ENCODE measurements at regions of chr16 and their contacts with region 1.

Region 1: GRCh38 chr16:18801197-18801972 is at the start of gene ARL6IP1:
- DNase-seq: peak; percentile 99 to 100 (median 99)
- H3K4me3 ChIP-seq: peak within 1 kb of the TSS; percentile 87 to 96
- H3K4me3 Mint-ChIP-seq: peak within 1 kb of the TSS; percentile 91 to 99 (median 94)
- H3K27ac ChIP-seq: peak within 1 kb of the TSS; percentile 90
- H3K27ac Mint-ChIP-seq: peak within 1 kb of the TSS; percentile 90 to 98 (median 96)
- H3K4me1 ChIP-seq: peaks cover 50% of the 10 kb centered on the region
- H3K4me1 Mint-ChIP-seq: peaks cover 27 to 67% (median 49%) of the 10 kb centered on the region in 4 donors
- H3K27me3 ChIP-seq: no peaks in the 10 kb centered on the region
- H3K27me3 Mint-ChIP-seq: no peaks in the 10 kb centered on the region
- total RNA-seq, gene ARL6IP1: 105 to 106 TPM

Region 2: GRCh38 chr16:18789850-18790724 is 11.3 kb before region 1 on chr16 and contains the start of gene RPS15A:
- CTCF ChIA-PET with region 1: interaction called, 111 read pairs
- POLR2A ChIA-PET with region 1: interaction called, 176 read pairs
- intact Hi-C with region 1: loop called (anchors 1 kb)
- DNase-seq: peak; percentile 90 to 98 (median 95)
- H3K4me3 ChIP-seq: peak within 1 kb of the TSS; percentile 77 to 98
- H3K4me3 Mint-ChIP-seq: peak within 1 kb of the TSS; percentile 91 to 98 (median 96)
- H3K27ac ChIP-seq: peak within 1 kb of the TSS; percentile 80
- H3K27ac Mint-ChIP-seq: peak within 1 kb of the TSS; percentile 93 to 97 (median 96)
- H3K4me1 ChIP-seq: peaks cover 43% of the 10 kb centered on the region
- H3K4me1 Mint-ChIP-seq: peaks cover 36 to 53% (median 46%) of the 10 kb centered on the region in 4 donors
- H3K27me3 ChIP-seq: no peaks in the 10 kb centered on the region
- H3K27me3 Mint-ChIP-seq: no peaks in the 10 kb centered on the region
- total RNA-seq, gene RPS15A: 3,088 to 3,151 TPM

Region 3: DNA sequence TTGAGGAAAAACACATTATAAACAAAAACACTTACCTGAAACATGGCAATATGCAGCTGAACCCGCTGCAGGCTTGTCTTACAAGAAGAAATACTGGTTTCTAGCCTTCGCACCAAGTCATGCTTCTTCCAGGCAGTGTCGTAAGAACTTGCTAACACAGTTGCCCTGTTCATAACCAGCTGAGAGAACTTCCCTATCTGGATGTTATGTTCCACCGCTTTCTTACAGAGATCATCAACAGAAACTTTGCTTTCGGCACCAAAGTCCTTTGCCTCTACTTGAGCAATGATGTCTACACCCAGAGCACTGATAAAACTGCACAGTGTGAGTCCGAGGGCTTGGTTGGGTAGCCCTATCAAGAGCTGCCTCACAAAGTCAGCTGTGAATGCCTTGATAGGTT is 27.9 kb after region 1 on chr16:
- CTCF ChIA-PET with region 1: interaction called, 17 read pairs
- POLR2A ChIA-PET with region 1: interaction called, 5 read pairs
- intact Hi-C with region 1: no loop called
- DNase-seq: no peak
- H3K4me3 ChIP-seq: no peak overlapping the region
- H3K4me3 Mint-ChIP-seq: no peak overlapping the region
- H3K27ac ChIP-seq: no peak overlapping the region
- H3K27ac Mint-ChIP-seq: peak overlapping the region in 1 of 7 donors; percentile 6
- H3K4me1 ChIP-seq: no peaks in the 10 kb centered on the region
- H3K4me1 Mint-ChIP-seq: no peaks in the 10 kb centered on the region
- H3K27me3 ChIP-seq: no peaks in the 10 kb centered on the region
- H3K27me3 Mint-ChIP-seq: no peaks in the 10 kb centered on the region

Region 4: DNA sequence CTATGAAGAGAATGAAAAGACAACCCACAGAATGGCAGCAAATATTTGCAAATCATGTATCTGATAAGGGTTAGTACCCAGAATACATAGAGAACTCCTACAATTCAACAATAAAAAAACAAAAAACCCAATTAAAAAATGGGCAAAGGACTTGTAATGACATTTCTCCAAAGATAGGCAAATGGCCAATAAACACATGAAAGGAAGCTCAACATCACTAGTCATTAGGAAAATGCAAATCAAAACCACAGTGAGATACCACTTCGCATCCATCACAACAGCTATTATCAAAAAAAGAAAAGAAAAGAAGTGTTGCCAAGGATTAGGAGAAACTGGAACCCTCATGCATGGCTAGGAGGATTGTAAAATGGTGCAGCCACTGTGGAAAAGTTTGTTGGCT is 45.0 kb after region 1 on chr16:
- CTCF ChIA-PET with region 1: interaction called, 19 read pairs
- POLR2A ChIA-PET with region 1: no interaction called
- intact Hi-C with region 1: no loop called
- DNase-seq: no peak
- H3K4me3 ChIP-seq: no peak overlapping the region
- H3K4me3 Mint-ChIP-seq: no peak overlapping the region
- H3K27ac ChIP-seq: no peak overlapping the region
- H3K27ac Mint-ChIP-seq: peak overlapping the region in 2 of 7 donors; percentile 4 to 79
- H3K4me1 ChIP-seq: no peaks in the 10 kb centered on the region
- H3K4me1 Mint-ChIP-seq: peaks cover 0 to 1% (median 0%) of the 10 kb centered on the region in 4 donors
- H3K27me3 ChIP-seq: no peaks in the 10 kb centered on the region
- H3K27me3 Mint-ChIP-seq: no peaks in the 10 kb centered on the region

Region 5: GRCh38 chr16:18950469-18951185 is 149.2 kb after region 1 on chr16:
- CTCF ChIA-PET with region 1: interaction called, 24 read pairs
- POLR2A ChIA-PET with region 1: interaction called, 7 read pairs
- intact Hi-C with region 1: loop called (anchors 1 kb)
- DNase-seq: no peak
- H3K4me3 ChIP-seq: no peak overlapping the region
- H3K4me3 Mint-ChIP-seq: peak overlapping the region in 1 of 8 donors; percentile 25
- H3K27ac ChIP-seq: no peak overlapping the region
- H3K27ac Mint-ChIP-seq: no peak overlapping the region
- H3K4me1 ChIP-seq: peaks cover 17% of the 10 kb centered on the region
- H3K4me1 Mint-ChIP-seq: peaks cover 8 to 15% (median 10%) of the 10 kb centered on the region in 4 donors
- H3K27me3 ChIP-seq: no peaks in the 10 kb centered on the region
- H3K27me3 Mint-ChIP-seq: no peaks in the 10 kb centered on the region

Region 6: GRCh38 chr16:19067349-19068236 is 266.2 kb after region 1 on chr16 and contains the start of gene COQ7:
- CTCF ChIA-PET with region 1: interaction called, 6 read pairs
- POLR2A ChIA-PET with region 1: interaction called, 10 read pairs
- intact Hi-C with region 1: loop called (anchors 1 kb)
- DNase-seq: peak; percentile 99 to 100 (median 100)
- H3K4me3 ChIP-seq: peak within 1 kb of the TSS; percentile 79 to 99
- H3K4me3 Mint-ChIP-seq: peak within 1 kb of the TSS; percentile 92 to 96 (median 94)
- H3K27ac ChIP-seq: peak within 1 kb of the TSS; percentile 100
- H3K27ac Mint-ChIP-seq: peak within 1 kb of the TSS; percentile 93 to 99 (median 99)
- H3K4me1 ChIP-seq: peaks cover 9% of the 10 kb centered on the region
- H3K4me1 Mint-ChIP-seq: peaks cover 3 to 24% (median 14%) of the 10 kb centered on the region in 4 donors
- H3K27me3 ChIP-seq: no peaks in the 10 kb centered on the region
- H3K27me3 Mint-ChIP-seq: peaks cover 0 to 6% of the 10 kb centered on the region in 2 donors
- total RNA-seq, gene COQ7: 16.2 to 19.2 TPM

Region 7: DNA sequence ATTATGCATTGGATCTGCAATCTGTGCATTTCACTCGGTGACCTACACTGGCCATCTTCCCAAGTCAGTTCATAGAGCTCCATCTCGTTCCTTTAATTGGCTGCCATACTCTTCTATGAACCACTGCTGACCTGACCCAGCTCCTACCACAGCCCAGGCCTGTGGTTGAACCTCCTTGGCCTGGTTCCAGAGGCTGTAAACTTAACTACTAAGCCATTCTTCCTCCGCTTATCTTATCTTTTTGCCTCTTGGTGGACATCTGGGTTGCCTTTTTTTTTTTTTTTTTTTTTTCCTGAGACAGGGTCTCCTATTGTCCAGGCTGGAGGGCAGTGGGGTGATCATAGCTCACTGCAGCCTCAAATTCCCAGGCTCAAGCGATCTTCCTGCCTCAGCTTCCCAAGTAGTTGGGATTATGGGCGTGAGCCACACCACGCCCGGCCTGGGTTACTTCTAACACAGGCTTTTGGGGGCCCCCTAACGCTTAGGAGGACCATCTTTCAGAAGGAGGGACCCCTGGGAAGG is 284.4 kb after region 1 on chr16:
- CTCF ChIA-PET with region 1: no interaction called
- POLR2A ChIA-PET with region 1: no interaction called
- intact Hi-C with region 1: no loop called
- DNase-seq: no peak
- H3K4me3 ChIP-seq: no peak overlapping the region
- H3K4me3 Mint-ChIP-seq: no peak overlapping the region
- H3K27ac ChIP-seq: no peak overlapping the region
- H3K27ac Mint-ChIP-seq: no peak overlapping the region
- H3K4me1 ChIP-seq: peaks cover 11% of the 10 kb centered on the region
- H3K4me1 Mint-ChIP-seq: peaks cover 0 to 2% (median 0%) of the 10 kb centered on the region in 4 donors
- H3K27me3 ChIP-seq: no peaks in the 10 kb centered on the region
- H3K27me3 Mint-ChIP-seq: peaks cover 1 to 3% of the 10 kb centered on the region in 2 donors

Region 8: GRCh38 chr16:19223235-19224170 is 422.1 kb after region 1 on chr16:
- CTCF ChIA-PET with region 1: no interaction called
- POLR2A ChIA-PET with region 1: no interaction called
- intact Hi-C with region 1: no loop called
- DNase-seq: peak in 1 of 5 donors; percentile 4
- H3K4me3 ChIP-seq: no peak overlapping the region
- H3K4me3 Mint-ChIP-seq: no peak overlapping the region
- H3K27ac ChIP-seq: no peak overlapping the region
- H3K27ac Mint-ChIP-seq: no peak overlapping the region
- H3K4me1 ChIP-seq: no peaks in the 10 kb centered on the region
- H3K4me1 Mint-ChIP-seq: no peaks in the 10 kb centered on the region
- H3K27me3 ChIP-seq: no peaks in the 10 kb centered on the region
- H3K27me3 Mint-ChIP-seq: peaks cover 1 to 3% of the 10 kb centered on the region in 2 donors